Mammary epithelial cell (primary cell): ENCODE measurements at regions of chr1 and their contacts with region 1.

Region 1: DNA sequence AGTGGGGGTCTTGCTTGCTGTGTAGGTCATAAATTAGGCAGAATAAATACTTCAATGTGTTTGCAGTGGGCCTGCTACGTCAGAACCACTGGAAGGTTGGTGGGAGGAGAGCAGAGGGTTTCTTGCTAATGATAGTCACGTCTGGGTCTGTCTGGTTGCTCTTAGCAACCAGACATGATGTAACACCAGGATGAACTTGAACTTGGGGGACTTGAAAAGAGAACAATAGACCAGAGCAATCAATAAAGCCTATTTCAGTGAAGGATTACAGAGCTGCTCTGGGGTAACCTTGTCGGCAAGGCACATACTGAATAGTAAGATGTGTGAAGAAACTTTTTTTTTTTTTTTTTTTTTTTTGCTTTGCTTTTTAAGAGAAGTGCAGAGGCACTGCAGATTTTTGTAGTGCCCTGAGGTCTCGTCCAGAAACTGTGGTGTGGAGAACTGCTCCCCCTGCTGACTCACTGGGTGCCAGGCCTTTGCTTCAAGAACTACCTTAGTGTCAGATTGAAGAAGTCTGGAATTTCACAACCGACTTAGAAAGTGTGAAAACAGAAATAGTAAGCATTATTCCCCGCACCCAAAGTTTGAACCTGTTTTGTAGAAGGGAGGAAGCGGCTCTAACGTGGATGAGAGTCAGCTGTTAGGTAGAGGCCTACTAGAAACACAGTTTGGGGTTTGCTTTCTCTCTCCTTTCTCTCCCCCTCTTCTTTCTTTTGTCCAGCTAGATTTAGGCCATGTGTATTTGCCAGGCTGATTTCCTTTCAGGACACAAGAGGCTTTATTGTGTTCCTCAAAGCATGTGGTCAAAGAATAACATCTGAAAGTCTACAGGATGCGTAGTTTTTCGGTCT is 271.6 kb downstream of the TM2D1 start:
- DNase-seq: peak; percentile 88
- H3K4me3 ChIP-seq: no peak overlapping the region
- H3K27ac ChIP-seq: peak overlapping the region; percentile 70
- H3K4me1 ChIP-seq: peaks cover 22% of the 10 kb centered on the region
- H3K27me3 ChIP-seq: no peaks in the 10 kb centered on the region
- CTCF ChIP-seq: peak; percentile 88 to 91

Region 2: GRCh38 chr1:60281360-60281932 is 1171.9 kb before region 1 on chr1:
- CTCF ChIA-PET with region 1: no interaction called
- dilution Hi-C with region 1: no loop called
- in situ Hi-C with region 1: no loop called
- intact Hi-C with region 1: loop called (anchors 1 kb)
- DNase-seq: peak; percentile 55
- H3K4me3 ChIP-seq: no peak overlapping the region
- H3K27ac ChIP-seq: no peak overlapping the region
- H3K4me1 ChIP-seq: peaks cover 2% of the 10 kb centered on the region
- H3K27me3 ChIP-seq: no peaks in the 10 kb centered on the region
- CTCF ChIP-seq: peak; percentile 94 to 98

Region 3: GRCh38 chr1:60969971-60970509 is 483.3 kb before region 1 on chr1:
- CTCF ChIA-PET with region 1: no interaction called
- dilution Hi-C with region 1: no loop called
- in situ Hi-C with region 1: loop called in 1 of 2 experiments (anchors 10 kb)
- intact Hi-C with region 1: loop called (anchors 1 kb)
- DNase-seq: peak; percentile 46
- H3K4me3 ChIP-seq: no peak overlapping the region
- H3K27ac ChIP-seq: no peak overlapping the region
- H3K4me1 ChIP-seq: peaks cover 33% of the 10 kb centered on the region
- H3K27me3 ChIP-seq: no peaks in the 10 kb centered on the region
- CTCF ChIP-seq: peak; percentile 47 to 52

Region 4: DNA sequence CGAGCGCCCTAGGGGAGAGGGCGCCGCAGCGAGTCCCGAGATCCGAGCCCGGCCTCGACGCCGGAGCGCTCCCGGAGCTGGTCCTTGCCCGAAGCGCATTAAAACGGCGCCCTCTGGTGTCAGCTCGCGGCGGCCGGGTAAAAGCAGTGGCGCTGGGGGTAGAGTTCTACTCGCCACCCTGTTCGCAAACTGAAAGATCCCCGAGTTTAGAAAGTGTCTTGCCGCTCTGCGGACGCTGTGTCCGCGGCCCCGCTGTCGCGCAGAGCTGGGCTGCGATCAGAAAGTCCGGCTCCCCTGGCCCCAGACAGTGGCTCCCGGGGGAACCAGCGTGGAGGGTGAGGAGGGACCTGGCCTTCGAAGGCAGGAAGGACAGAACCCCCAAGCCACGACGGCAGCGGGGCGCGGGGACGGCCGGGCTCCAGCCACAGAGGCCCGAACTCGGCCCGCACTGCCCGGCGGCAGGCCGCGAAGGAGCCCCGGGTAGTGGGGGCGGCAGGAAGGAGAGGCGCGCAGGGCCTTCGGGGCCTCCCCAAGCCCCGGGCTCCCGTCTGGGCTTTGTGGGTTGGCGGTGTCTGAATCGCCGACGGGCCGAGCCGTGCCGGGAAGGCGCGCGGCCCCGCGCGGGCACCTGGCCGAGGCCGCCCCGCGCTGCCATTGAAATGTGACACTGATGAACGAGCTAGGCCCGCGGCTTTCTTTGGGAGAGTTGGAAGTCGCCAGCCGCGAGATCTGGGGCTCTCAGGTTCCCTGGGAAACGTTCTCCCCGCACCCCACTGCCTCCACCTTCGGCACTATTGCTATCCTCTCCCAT is 410.1 kb before region 1 on chr1:
- CTCF ChIA-PET with region 1: no interaction called
- dilution Hi-C with region 1: no loop called
- in situ Hi-C with region 1: no loop called
- intact Hi-C with region 1: loop called (anchors 1 kb)
- DNase-seq: peak; percentile 62
- H3K4me3 ChIP-seq: peak overlapping the region; percentile 52 to 56 (median 56)
- H3K27ac ChIP-seq: no peak overlapping the region
- H3K4me1 ChIP-seq: peaks cover 14% of the 10 kb centered on the region
- H3K27me3 ChIP-seq: no peaks in the 10 kb centered on the region
- CTCF ChIP-seq: peak; percentile 65 to 90

Region 5: DNA sequence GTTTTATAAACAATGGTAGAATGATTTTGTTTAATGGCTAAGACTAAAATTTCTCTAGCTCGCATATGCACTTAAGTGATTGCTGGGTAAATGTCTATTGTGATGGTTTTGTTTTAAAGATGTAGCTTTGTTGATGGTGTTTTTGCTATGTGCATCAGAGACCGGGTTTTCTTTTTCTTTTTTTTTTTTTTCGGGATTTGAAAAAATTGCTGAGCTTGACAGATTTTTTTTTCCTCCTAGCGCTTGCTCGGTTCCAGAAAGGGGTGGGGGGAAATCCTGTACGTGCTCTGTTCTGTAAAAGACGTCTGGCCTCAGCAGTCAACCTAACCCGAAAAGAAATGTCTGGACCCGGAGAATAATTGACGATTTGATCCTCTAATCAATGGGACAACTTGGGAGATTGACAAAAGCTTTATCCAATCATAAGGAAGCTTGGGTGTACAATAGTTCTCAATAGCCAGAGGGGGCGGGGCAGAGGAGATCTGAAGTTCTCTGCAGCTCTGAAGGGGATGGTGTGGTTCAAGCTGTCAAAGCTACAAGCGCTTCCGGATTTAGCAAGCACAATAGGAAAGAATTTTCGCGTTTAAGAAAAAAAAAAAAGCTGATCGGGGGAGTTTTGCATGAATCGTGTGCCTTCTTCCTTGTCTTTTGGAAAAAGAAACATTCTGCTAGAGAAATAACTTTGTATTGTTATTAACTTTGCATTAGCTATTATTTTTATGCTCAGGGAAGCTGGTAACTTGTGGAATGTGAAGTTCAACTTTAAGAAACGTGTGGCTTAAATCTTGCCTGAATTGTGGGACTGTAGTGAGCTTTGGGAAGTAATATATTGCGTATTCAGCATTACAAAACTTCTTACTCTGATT is 375.4 kb before region 1 on chr1:
- CTCF ChIA-PET with region 1: no interaction called
- dilution Hi-C with region 1: no loop called
- in situ Hi-C with region 1: loop called in 1 of 2 experiments (anchors 25 kb)
- intact Hi-C with region 1: loop called (anchors 1 kb)
- DNase-seq: peak; percentile 100
- H3K4me3 ChIP-seq: peak overlapping the region; percentile 63 to 92 (median 81)
- H3K27ac ChIP-seq: peak overlapping the region; percentile 64
- H3K4me1 ChIP-seq: peaks cover 33% of the 10 kb centered on the region
- H3K27me3 ChIP-seq: no peaks in the 10 kb centered on the region
- CTCF ChIP-seq: no peak

Region 6: GRCh38 chr1:61202854-61203598 is 250.3 kb before region 1 on chr1:
- CTCF ChIA-PET with region 1: no interaction called
- dilution Hi-C with region 1: no loop called
- in situ Hi-C with region 1: no loop called
- intact Hi-C with region 1: loop called (anchors 10 kb)
- DNase-seq: peak; percentile 53
- H3K4me3 ChIP-seq: peak overlapping the region; percentile 30 to 37 (median 32)
- H3K27ac ChIP-seq: peak overlapping the region; percentile 26
- H3K4me1 ChIP-seq: no peaks in the 10 kb centered on the region
- H3K27me3 ChIP-seq: no peaks in the 10 kb centered on the region
- CTCF ChIP-seq: no peak

Region 7: DNA sequence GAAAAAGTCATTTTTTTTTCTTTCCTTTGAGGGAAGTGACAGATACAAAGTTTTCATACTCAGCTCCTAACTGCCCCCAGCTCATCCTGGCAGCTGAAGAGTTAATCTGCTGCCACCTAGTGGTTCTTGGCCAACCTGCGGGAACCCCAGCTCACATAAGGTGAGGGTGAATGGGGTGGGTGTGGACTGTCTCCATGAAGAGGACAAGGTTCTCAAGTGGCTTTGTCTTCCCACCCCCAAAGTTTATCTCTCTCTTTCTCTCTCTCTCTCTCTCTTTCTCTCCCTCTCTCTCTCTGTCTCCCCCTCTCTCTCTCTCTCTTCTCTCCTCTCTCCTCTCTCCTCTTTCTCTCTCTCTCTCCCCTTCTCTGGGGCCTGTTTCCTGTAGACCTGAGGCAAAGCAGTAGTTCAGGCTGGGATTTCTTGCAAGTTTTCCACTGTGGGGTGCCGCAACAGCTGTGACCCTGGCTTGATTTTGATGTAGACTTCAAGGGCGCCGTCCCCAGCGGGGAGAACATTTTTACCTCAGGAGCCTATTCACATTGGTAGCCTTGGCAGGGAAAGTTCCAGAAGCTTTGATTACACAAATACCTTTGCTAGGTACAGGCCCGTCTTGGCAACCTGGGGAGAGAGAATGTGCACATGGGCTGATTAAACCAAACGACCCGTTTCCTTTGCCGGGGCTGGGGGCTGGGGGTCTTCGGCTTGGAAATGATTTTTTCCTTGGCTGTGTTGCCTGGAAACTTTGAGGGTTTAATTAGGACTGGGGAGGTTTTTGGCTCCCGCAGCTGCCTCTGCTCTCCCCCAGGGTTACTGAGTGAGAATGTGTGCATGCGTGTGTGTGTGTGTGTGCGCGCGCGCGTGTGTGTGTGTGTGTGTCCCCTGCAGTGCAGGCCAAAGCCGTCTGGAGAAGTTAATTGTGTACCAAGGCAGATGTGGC is 135.7 kb after region 1 on chr1:
- CTCF ChIA-PET with region 1: interaction called, 10 read pairs
- dilution Hi-C with region 1: no loop called
- in situ Hi-C with region 1: no loop called
- intact Hi-C with region 1: loop called (anchors 5 kb)
- DNase-seq: peak; percentile 63
- H3K4me3 ChIP-seq: no peak overlapping the region
- H3K27ac ChIP-seq: no peak overlapping the region
- H3K4me1 ChIP-seq: peaks cover 11% of the 10 kb centered on the region
- H3K27me3 ChIP-seq: no peaks in the 10 kb centered on the region
- CTCF ChIP-seq: peak; percentile 91 to 92